ENCODE measurements at regions of chr18 and their contacts with region 1.

Region 1: GRCh38 chr18:7575157-7576028 is 8.3 kb downstream of the PTPRM start:
- DNase-seq: peak in 1 of 2 experiments; percentile 65
- H3K4me3 ChIP-seq: peak overlapping the region; percentile 5; the same call in 1 of the 2 replicates
- H3K27ac ChIP-seq: peak overlapping the region; percentile 74
- H3K4me1 ChIP-seq: peaks cover 39% of the 10 kb centered on the region
- H3K27me3 ChIP-seq: no peaks in the 10 kb centered on the region
- CTCF ChIP-seq: no peak

Region 2: DNA sequence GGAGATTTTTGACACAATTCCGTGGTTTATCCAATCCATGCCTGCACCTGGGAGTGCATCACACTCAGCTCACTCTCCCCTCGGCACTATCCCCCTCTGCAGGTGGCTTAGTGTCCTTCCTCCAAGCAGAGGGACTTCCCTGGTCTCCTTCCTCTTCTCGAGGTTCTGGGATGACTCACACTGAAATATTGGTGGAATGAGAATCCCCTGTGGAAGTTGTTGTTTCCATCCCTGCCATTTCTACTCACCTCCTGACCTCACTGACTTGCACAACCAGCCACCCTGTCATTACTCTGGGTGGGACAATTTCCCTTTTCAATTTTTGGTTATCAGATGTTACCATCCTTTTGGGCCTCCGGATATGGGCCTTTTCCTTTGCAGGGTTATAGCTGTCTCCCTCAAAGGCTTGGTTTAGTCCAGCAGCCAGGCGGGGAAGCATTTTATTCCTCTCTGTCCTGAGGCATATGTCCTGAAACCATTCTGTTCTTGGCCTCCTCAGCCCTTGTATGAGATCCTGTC is 51.6 kb after region 1 on chr18:
- CTCF ChIA-PET with region 1: interaction called, 4 read pairs
- POLR2A ChIA-PET with region 1: no interaction called
- intact Hi-C with region 1: loop called (anchors 2 kb)
- DNase-seq: peak; percentile 52 to 84
- H3K4me3 ChIP-seq: peak overlapping the region; percentile 16; the same call in 1 of the 2 replicates
- H3K27ac ChIP-seq: peak overlapping the region; percentile 53
- H3K4me1 ChIP-seq: peaks cover 23% of the 10 kb centered on the region
- H3K27me3 ChIP-seq: no peaks in the 10 kb centered on the region
- CTCF ChIP-seq: peak; percentile 58

Region 3: GRCh38 chr18:7637269-7637668 is 61.9 kb after region 1 on chr18:
- CTCF ChIA-PET with region 1: no interaction called
- POLR2A ChIA-PET with region 1: no interaction called
- intact Hi-C with region 1: no loop called
- DNase-seq: peak in 1 of 2 experiments; percentile 72
- H3K4me3 ChIP-seq: no peak overlapping the region
- H3K27ac ChIP-seq: no peak overlapping the region
- H3K4me1 ChIP-seq: peaks cover 14% of the 10 kb centered on the region
- H3K27me3 ChIP-seq: no peaks in the 10 kb centered on the region
- CTCF ChIP-seq: no peak

Region 4: GRCh38 chr18:7735194-7735593 is 159.8 kb after region 1 on chr18:
- CTCF ChIA-PET with region 1: no interaction called
- POLR2A ChIA-PET with region 1: no interaction called
- intact Hi-C with region 1: no loop called
- DNase-seq: no peak
- H3K4me3 ChIP-seq: no peak overlapping the region
- H3K27ac ChIP-seq: no peak overlapping the region
- H3K4me1 ChIP-seq: 0 out of 2 replicates have a peak, but pooled peaks cover 7% of the 10 kb centered on the region
- H3K27me3 ChIP-seq: no peaks in the 10 kb centered on the region
- CTCF ChIP-seq: peak; percentile 53; the same call in 1 of the 2 replicates